Sciatic nerve (tissue), 2 donors: ENCODE measurements at regions of chr20 and their contacts with region 1.

Region 1: GRCh38 chr20:40717343-40717865 is 28.4 kb upstream of the MAFB start:
- DNase-seq: no peak
- ATAC-seq: no peak

Region 2: DNA sequence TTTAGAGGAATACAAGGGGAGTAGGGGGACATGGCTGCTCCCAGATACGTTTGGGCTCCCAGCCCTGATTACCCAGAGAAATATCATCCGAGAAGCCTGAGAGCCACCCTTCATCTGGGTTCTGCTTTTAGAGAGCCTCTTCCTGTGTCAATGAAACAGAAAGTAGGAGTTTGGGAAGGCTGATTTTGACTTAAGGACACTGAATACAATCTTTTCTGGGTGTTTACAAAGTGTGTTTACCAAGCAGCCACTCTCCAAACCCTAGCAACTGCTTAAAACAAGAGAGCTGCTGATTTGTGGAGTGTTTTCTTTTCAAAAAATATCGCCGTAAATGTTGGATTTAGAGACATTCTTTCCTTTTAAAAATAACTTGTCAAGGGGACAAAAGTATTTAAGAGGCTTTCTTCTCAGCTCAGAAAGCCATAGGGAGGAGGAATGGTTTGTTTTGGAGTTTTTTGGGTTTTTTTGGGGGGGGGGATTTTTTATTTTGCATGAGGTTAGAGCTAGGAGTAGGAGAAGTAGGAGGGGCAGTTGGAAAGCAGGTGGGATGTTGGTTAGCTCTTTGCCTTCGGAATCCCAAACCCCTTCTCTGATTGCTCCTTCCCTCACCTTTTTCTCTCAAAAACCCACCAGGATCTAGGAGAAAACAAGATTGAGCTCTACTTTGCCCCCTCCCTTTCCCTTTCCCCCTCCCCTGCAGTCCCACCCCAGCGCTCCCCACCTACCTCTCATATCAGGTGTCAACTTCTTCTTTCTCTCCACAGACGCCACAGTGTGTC is 40.7 kb before region 1 on chr20:
- intact Hi-C with region 1: loop called (anchors 2 kb)
- DNase-seq: no peak
- ATAC-seq: no peak

Region 3: GRCh38 chr20:41798930-41799502 is 1081.6 kb after region 1 on chr20:
- intact Hi-C with region 1: no loop called
- DNase-seq: no peak
- ATAC-seq: no peak